ENCODE measurements at regions of chr11 and their contacts with region 1.

Region 1: GRCh38 chr11:126573325-126574076 is 218.0 kb downstream of the ST3GAL4 start:
- DNase-seq: peak; percentile 58
- ATAC-seq: peak; percentile 86
- H3K4me3 Mint-ChIP-seq: no peak overlapping the region
- H3K27ac Mint-ChIP-seq: no peak overlapping the region
- H3K4me1 Mint-ChIP-seq: peaks cover 16% of the 10 kb centered on the region
- H3K27me3 Mint-ChIP-seq: peaks cover 2% of the 10 kb centered on the region
- CTCF ChIP-seq: peak; percentile 32; the same call in 1 of the 2 replicates

Region 2: GRCh38 chr11:125625630-125626287 is 947.7 kb before region 1 on chr11:
- CTCF ChIA-PET with region 1: no interaction called
- POLR2A ChIA-PET with region 1: no interaction called
- DNase-seq: peak; percentile 95
- ATAC-seq: peak; percentile 87
- H3K4me3 Mint-ChIP-seq: peak overlapping the region; percentile 88
- H3K27ac Mint-ChIP-seq: peak overlapping the region; percentile 97
- H3K4me1 Mint-ChIP-seq: peaks cover 13% of the 10 kb centered on the region
- H3K27me3 Mint-ChIP-seq: no peaks in the 10 kb centered on the region
- CTCF ChIP-seq: no peak

Region 3: GRCh38 chr11:126440792-126441514 is 132.5 kb before region 1 on chr11:
- CTCF ChIA-PET with region 1: interaction called, 20 read pairs
- POLR2A ChIA-PET with region 1: no interaction called
- DNase-seq: peak; percentile 95
- ATAC-seq: peak; percentile 85
- H3K4me3 Mint-ChIP-seq: peak overlapping the region; percentile 42
- H3K27ac Mint-ChIP-seq: no peak overlapping the region
- H3K4me1 Mint-ChIP-seq: peaks cover 31% of the 10 kb centered on the region
- H3K27me3 Mint-ChIP-seq: no peaks in the 10 kb centered on the region; the same call in 1 of the 2 replicates
- CTCF ChIP-seq: peak; percentile 95

Region 4: GRCh38 chr11:126561327-126561893 is 12.1 kb before region 1 on chr11:
- CTCF ChIA-PET with region 1: interaction called, 18 read pairs
- POLR2A ChIA-PET with region 1: no interaction called
- DNase-seq: peak; percentile 80
- ATAC-seq: peak; percentile 57
- H3K4me3 Mint-ChIP-seq: no peak overlapping the region
- H3K27ac Mint-ChIP-seq: no peak overlapping the region
- H3K4me1 Mint-ChIP-seq: peaks cover 33% of the 10 kb centered on the region
- H3K27me3 Mint-ChIP-seq: peaks cover 35% of the 10 kb centered on the region
- CTCF ChIP-seq: no peak

Region 5: DNA sequence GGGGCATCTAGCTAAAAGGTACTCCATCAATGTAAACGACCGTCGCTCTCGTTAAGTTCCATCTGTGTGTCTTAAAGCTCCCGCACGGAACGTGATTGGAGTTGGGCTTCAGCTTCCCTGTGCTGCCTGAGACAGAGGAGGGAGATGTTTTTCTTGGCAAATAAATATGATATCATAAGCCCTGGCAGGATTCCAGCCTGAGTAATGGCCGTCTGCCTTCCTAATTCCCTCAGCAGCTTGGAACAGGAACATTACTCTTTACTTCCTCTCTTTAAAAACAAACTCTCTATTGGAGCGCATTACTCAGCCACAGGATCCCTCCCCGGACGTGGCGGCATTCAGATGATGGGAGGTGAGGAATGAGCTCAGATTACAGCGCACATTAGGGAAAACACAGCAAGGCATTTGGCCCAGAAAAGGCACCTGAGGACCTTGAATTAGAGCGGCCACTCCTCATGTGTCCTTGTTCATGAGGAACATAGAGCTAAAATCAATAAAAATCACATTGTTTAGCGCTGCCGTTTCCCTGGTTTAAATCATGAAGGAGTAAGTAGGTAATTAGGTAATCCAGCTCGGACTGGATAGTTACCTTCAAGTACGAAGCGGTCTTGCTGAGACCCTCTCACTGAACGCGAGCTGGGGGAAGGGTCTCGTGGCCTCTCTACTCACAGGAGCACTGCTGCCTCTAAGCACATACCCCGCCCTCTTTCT is 12.4 kb after region 1 on chr11:
- CTCF ChIA-PET with region 1: interaction called, 47 read pairs
- POLR2A ChIA-PET with region 1: interaction called, 6 read pairs
- DNase-seq: peak; percentile 53
- ATAC-seq: peak; percentile 82
- H3K4me3 Mint-ChIP-seq: no peak overlapping the region
- H3K27ac Mint-ChIP-seq: no peak overlapping the region
- H3K4me1 Mint-ChIP-seq: peaks cover 13% of the 10 kb centered on the region
- H3K27me3 Mint-ChIP-seq: no peaks in the 10 kb centered on the region; the same call in 1 of the 2 replicates
- CTCF ChIP-seq: no peak

Region 6: GRCh38 chr11:126601550-126602215 is 28.2 kb after region 1 on chr11:
- CTCF ChIA-PET with region 1: interaction called, 21 read pairs
- POLR2A ChIA-PET with region 1: no interaction called
- DNase-seq: no peak
- ATAC-seq: peak; percentile 45
- H3K4me3 Mint-ChIP-seq: 0 out of 2 replicates have a peak overlapping the region, but pooled peaks have one; percentile 9
- H3K27ac Mint-ChIP-seq: peak overlapping the region; percentile 17; the same call in 1 of the 2 replicates
- H3K4me1 Mint-ChIP-seq: peaks cover 34% of the 10 kb centered on the region
- H3K27me3 Mint-ChIP-seq: no peaks in the 10 kb centered on the region
- CTCF ChIP-seq: no peak